ENCODE measurements at regions of chr4 and their contacts with region 1.

Region 1: DNA sequence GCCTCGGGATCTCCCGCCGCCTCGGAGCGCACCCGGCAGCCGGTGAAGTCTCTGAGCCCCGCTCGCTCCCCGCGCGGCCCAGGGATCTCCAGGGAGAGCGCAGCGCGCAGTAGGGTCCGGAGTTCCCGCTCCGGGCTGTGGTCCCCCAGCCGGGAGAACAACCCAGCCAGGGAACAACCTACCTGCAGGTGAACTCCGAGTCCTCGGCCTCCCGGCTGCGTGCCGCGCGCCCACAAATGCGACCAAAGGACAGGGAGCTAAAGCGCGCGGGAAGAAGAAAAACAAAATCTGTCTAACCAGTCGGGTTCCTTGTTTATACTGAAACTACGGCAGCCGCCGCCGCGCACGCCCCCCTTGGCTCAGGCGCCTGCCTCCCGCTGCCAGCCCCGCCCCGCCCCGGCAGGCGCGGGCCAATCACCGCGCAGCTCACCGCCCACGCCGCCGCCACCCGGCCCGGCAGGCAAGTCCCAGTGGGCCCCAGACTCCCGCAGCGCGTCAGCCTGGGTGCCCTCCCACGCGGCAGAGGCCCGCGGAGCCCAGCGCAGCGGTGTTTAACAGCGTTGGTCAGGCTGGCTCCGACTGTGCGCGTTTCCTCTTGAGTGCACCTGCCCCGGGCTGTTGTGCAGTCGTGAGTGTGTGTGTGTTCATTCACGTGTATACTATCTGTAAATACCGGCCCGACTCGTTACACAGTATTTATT is at the start of gene RASGEF1B:
- DNase-seq: peak; percentile 93
- H3K4me3 Mint-ChIP-seq: peak within 1 kb of the TSS; percentile 86
- H3K27ac Mint-ChIP-seq: peak within 1 kb of the TSS; percentile 91
- H3K4me1 Mint-ChIP-seq: peaks cover 31% of the 10 kb centered on the region
- H3K27me3 Mint-ChIP-seq: no peaks in the 10 kb centered on the region
- total RNA-seq, gene RASGEF1B: 6.5 to 6.7 TPM

Region 2: GRCh38 chr4:80515496-80515895 is 956.2 kb before region 1 on chr4:
- CTCF ChIA-PET with region 1: no interaction called
- intact Hi-C with region 1: no loop called
- DNase-seq: no peak
- H3K4me3 Mint-ChIP-seq: no peak overlapping the region
- H3K27ac Mint-ChIP-seq: no peak overlapping the region
- H3K4me1 Mint-ChIP-seq: no peaks in the 10 kb centered on the region
- H3K27me3 Mint-ChIP-seq: no peaks in the 10 kb centered on the region

Region 3: GRCh38 chr4:81260443-81261101 is 211.2 kb before region 1 on chr4:
- CTCF ChIA-PET with region 1: no interaction called
- intact Hi-C with region 1: no loop called
- DNase-seq: no peak
- H3K4me3 Mint-ChIP-seq: no peak overlapping the region
- H3K27ac Mint-ChIP-seq: no peak overlapping the region
- H3K4me1 Mint-ChIP-seq: no peaks in the 10 kb centered on the region
- H3K27me3 Mint-ChIP-seq: peaks cover 4% of the 10 kb centered on the region

Region 4: DNA sequence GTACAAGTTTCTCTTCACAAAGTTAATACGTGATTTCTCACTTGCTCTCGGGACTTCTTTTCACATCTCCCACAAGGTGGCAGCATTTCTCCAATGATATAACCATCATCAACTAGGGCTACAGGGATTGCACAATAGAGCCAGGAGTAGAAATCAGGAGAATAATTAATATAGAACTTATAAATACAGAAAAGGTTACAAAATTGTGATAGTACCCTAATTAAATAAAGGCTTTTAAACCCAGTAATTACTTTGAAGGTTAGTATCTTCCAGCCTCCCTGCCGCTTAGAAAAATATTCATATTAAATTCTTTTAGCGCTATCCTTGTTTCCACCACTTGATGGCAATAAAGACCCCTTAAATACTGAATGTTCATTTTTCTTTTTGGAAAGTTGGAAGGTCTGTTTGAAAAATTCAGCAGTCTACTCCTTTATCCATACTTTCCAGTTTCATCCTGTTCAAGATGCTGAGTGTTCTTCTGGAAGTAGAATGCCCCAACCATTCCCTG is 65.8 kb before region 1 on chr4:
- CTCF ChIA-PET with region 1: no interaction called
- intact Hi-C with region 1: loop called (anchors 1 kb)
- DNase-seq: peak; percentile 52
- H3K4me3 Mint-ChIP-seq: no peak overlapping the region
- H3K27ac Mint-ChIP-seq: no peak overlapping the region
- H3K4me1 Mint-ChIP-seq: peaks cover 3% of the 10 kb centered on the region
- H3K27me3 Mint-ChIP-seq: no peaks in the 10 kb centered on the region

Region 5: GRCh38 chr4:81505004-81505598 is 33.4 kb after region 1 on chr4:
- CTCF ChIA-PET with region 1: interaction called, 6 read pairs
- intact Hi-C with region 1: loop called (anchors 1 kb)
- DNase-seq: peak; percentile 86
- H3K4me3 Mint-ChIP-seq: peak overlapping the region; percentile 25
- H3K27ac Mint-ChIP-seq: peak overlapping the region; percentile 37
- H3K4me1 Mint-ChIP-seq: peaks cover 42% of the 10 kb centered on the region
- H3K27me3 Mint-ChIP-seq: no peaks in the 10 kb centered on the region

Region 6: GRCh38 chr4:81648576-81649275 is 177.0 kb after region 1 on chr4:
- CTCF ChIA-PET with region 1: interaction called, 7 read pairs
- intact Hi-C with region 1: loop called (anchors 1 kb)
- DNase-seq: peak; percentile 60
- H3K4me3 Mint-ChIP-seq: no peak overlapping the region
- H3K27ac Mint-ChIP-seq: no peak overlapping the region
- H3K4me1 Mint-ChIP-seq: peaks cover 57% of the 10 kb centered on the region
- H3K27me3 Mint-ChIP-seq: no peaks in the 10 kb centered on the region

Region 7: DNA sequence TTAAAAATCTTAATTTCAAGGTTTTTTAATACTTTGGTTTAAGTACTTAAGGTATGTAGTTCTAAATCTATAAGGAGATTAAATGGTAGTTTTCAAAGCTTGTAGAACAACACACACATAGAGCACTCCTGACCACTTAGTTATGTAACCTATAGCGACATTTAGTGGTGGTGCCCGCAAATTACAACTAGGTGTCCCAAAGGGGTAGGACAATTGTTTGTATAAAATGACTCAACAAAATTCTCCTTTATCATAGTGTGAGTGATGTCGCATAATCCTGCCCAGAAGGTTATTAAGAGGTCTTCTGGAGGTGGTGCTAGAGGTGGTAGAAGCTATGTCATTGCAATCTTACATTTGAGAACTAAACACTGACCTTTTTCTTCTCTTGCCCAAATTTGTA is 373.0 kb after region 1 on chr4:
- CTCF ChIA-PET with region 1: interaction called, 60 read pairs
- intact Hi-C with region 1: loop called (anchors 1 kb)
- DNase-seq: peak; percentile 89
- H3K4me3 Mint-ChIP-seq: no peak overlapping the region
- H3K27ac Mint-ChIP-seq: no peak overlapping the region
- H3K4me1 Mint-ChIP-seq: peaks cover 13% of the 10 kb centered on the region
- H3K27me3 Mint-ChIP-seq: no peaks in the 10 kb centered on the region

Region 8: DNA sequence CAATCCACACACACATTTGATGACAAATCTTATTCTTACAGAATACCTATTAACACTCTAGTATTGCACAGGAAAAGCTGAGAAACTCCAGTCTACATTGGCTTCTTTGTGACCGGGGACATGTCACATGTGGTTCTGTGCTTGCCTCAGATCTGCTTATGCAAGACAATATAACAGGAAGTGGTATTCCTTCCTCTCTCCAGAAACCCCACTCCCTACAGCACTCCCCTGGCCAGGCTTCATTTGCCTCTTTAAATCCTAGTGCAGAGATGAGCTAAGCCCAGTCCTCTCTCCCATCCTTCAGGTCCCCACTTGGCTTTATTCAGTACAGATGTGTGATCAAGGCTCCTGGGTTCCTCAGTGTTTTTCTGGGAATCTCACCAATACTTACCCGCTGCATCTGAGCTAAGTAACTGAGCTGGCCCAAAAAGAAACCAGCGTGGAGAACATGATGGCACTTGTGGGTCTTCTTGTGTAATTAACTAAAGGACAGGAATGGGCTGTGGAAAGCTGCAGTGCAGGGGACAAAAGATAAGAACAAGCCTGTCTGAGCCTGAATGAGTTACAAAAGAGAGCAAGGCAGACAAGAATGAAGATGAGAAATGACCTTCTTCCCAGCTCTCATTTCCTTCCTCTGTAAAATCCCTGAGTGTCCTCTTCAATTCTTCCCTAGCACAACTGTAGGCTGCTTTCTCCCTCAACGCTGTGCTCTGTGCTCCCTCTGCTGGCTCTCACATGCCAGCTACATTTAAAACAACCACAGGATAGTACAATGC is 796.5 kb after region 1 on chr4:
- CTCF ChIA-PET with region 1: interaction called, 5 read pairs
- intact Hi-C with region 1: loop called (anchors 1 kb)
- DNase-seq: peak; percentile 70
- H3K4me3 Mint-ChIP-seq: no peak overlapping the region
- H3K27ac Mint-ChIP-seq: no peak overlapping the region
- H3K4me1 Mint-ChIP-seq: peaks cover 18% of the 10 kb centered on the region
- H3K27me3 Mint-ChIP-seq: no peaks in the 10 kb centered on the region

Region 9: GRCh38 chr4:82428969-82429727 is 957.4 kb after region 1 on chr4:
- CTCF ChIA-PET with region 1: no interaction called
- intact Hi-C with region 1: loop called (anchors 5 kb)
- DNase-seq: peak; percentile 92
- H3K4me3 Mint-ChIP-seq: peak overlapping the region; percentile 93
- H3K27ac Mint-ChIP-seq: peak overlapping the region; percentile 99
- H3K4me1 Mint-ChIP-seq: peaks cover 64% of the 10 kb centered on the region
- H3K27me3 Mint-ChIP-seq: no peaks in the 10 kb centered on the region

Measured in activated naive CD4-positive, alpha-beta T cell treated with anti-CD3 and anti-CD28 coated beads for 36 hours (primary cell).